SK-N-SH (cell line): ENCODE measurements at regions of chr7 and their contacts with region 1.

Region 1: GRCh38 chr7:101363734-101364374 is 1.2 kb downstream of the COL26A1 start:
- DNase-seq: peak; percentile 98
- H3K4me3 ChIP-seq: peak overlapping the region; percentile 56 to 70
- H3K27ac ChIP-seq: peak overlapping the region in 1 of 2 experiments; percentile 9; a peak in 1 of 4 replicates
- H3K4me1 ChIP-seq: peaks cover 0 to 4% of the 10 kb centered on the region in 2 experiments; a peak in 1 of 4 replicates
- H3K27me3 ChIP-seq: peaks cover 11% of the 10 kb centered on the region
- CTCF ChIP-seq: peak; percentile 98
- EP300 ChIP-seq: no peak
- RAD21 ChIP-seq: peak; percentile 91

Region 2: GRCh38 chr7:101347477-101347876 is 16.4 kb before region 1 on chr7:
- CTCF ChIA-PET with region 1: interaction called, 20 read pairs
- POLR2A ChIA-PET with region 1: no interaction called
- DNase-seq: no peak
- H3K4me3 ChIP-seq: no peak overlapping the region
- H3K27ac ChIP-seq: no peak overlapping the region
- H3K4me1 ChIP-seq: no peaks in the 10 kb centered on the region
- H3K27me3 ChIP-seq: peaks cover 19% of the 10 kb centered on the region
- CTCF ChIP-seq: no peak
- EP300 ChIP-seq: no peak
- RAD21 ChIP-seq: no peak

Region 3: GRCh38 chr7:101390901-101391301 is 27.0 kb after region 1 on chr7:
- CTCF ChIA-PET with region 1: interaction called, 12 read pairs
- POLR2A ChIA-PET with region 1: no interaction called
- DNase-seq: peak; percentile 87
- H3K4me3 ChIP-seq: no peak overlapping the region
- H3K27ac ChIP-seq: peak overlapping the region in 1 of 2 experiments; percentile 4; a peak in 1 of 4 replicates
- H3K4me1 ChIP-seq: peaks cover 0 to 14% of the 10 kb centered on the region in 2 experiments; a peak in 1 of 4 replicates
- H3K27me3 ChIP-seq: peaks cover 16% of the 10 kb centered on the region
- CTCF ChIP-seq: no peak
- EP300 ChIP-seq: peak in 1 of 2 experiments; percentile 80; a peak in 2 of 4 replicates
- RAD21 ChIP-seq: peak; percentile 9; the same call in 1 of the 2 replicates

Region 4: GRCh38 chr7:101426303-101427011 is 62.6 kb after region 1 on chr7:
- CTCF ChIA-PET with region 1: interaction called, 14 read pairs
- POLR2A ChIA-PET with region 1: no interaction called
- DNase-seq: no peak
- H3K4me3 ChIP-seq: no peak overlapping the region
- H3K27ac ChIP-seq: no peak overlapping the region
- H3K4me1 ChIP-seq: no peaks in the 10 kb centered on the region
- H3K27me3 ChIP-seq: peaks cover 72% of the 10 kb centered on the region
- CTCF ChIP-seq: no peak
- EP300 ChIP-seq: no peak
- RAD21 ChIP-seq: no peak